Activated CD8-positive, alpha-beta T cell treated with anti-CD3 and anti-CD28 coated beads for 36 hours (primary cell): ENCODE measurements at regions of chr14 and their contacts with region 1.

Region 1: GRCh38 chr14:75050852-75051554 is at the start of gene MLH3:
- DNase-seq: peak; percentile 81
- ATAC-seq: peak; percentile 80
- H3K4me3 Mint-ChIP-seq: peak within 1 kb of the TSS; percentile 84
- H3K27ac Mint-ChIP-seq: peak within 1 kb of the TSS; percentile 91
- H3K4me1 Mint-ChIP-seq: peaks cover 56% of the 10 kb centered on the region
- H3K27me3 Mint-ChIP-seq: no peaks in the 10 kb centered on the region
- CTCF ChIP-seq: no peak
- total RNA-seq, gene MLH3: 26.8 to 29.0 TPM

Region 2: GRCh38 chr14:74913986-74914573 is 136.9 kb before region 1 on chr14:
- CTCF ChIA-PET with region 1: no interaction called
- POLR2A ChIA-PET with region 1: no interaction called
- intact Hi-C with region 1: no loop called
- DNase-seq: peak; percentile 37
- ATAC-seq: peak; percentile 58
- H3K4me3 Mint-ChIP-seq: no peak overlapping the region
- H3K27ac Mint-ChIP-seq: no peak overlapping the region
- H3K4me1 Mint-ChIP-seq: no peaks in the 10 kb centered on the region
- H3K27me3 Mint-ChIP-seq: no peaks in the 10 kb centered on the region
- CTCF ChIP-seq: peak; percentile 34

Region 3: GRCh38 chr14:75002392-75003249 is 48.4 kb before region 1 on chr14 and contains the start of gene EIF2B2:
- CTCF ChIA-PET with region 1: no interaction called
- POLR2A ChIA-PET with region 1: no interaction called
- intact Hi-C with region 1: no loop called
- DNase-seq: peak; percentile 99
- ATAC-seq: peak; percentile 98
- H3K4me3 Mint-ChIP-seq: peak within 1 kb of the TSS; percentile 94
- H3K27ac Mint-ChIP-seq: peak within 1 kb of the TSS; percentile 95
- H3K4me1 Mint-ChIP-seq: peaks cover 35% of the 10 kb centered on the region
- H3K27me3 Mint-ChIP-seq: no peaks in the 10 kb centered on the region
- CTCF ChIP-seq: peak; percentile 18
- total RNA-seq, gene EIF2B2: 50.5 to 51.9 TPM

Region 4: DNA sequence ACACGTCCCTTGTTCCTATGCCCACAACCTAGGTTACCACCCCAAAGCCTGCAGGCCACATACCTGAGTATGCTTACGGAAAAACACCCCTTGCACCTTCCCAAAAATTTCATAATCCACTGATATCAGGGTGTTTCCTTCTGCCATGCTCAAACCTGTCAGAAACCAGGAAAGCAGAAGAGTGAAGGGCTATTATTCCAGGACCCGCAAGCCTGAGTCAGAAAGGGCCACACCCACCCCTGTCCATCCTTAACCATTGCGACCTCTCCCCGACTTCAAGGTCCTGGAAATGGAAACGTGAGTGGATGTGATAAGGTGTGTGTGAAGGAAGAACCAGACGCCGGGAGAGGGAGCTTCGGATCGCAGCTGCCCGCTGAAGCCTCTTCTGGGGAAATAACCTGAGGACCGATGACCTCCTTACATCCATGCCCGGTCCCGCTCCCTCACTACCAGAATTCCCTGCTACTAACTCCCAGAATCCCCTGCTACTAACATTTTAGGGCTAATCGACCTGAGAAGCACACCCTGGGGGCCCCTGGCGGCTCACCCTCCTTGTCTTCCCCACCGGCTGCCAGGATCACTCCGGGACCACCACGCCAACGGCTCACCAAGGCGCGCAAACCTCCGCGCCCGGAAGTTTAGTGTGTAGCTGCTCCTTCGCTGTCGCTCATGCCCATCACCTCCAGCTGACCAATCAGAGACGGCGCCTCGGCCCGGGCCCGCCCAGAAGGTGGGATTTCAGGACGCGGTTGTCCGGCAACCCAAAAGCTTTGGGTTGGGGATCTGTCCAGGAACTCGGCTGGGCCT is 12.6 kb after region 1 on chr14 and contains the start of gene ACYP1:
- CTCF ChIA-PET with region 1: interaction called, 28 read pairs
- POLR2A ChIA-PET with region 1: interaction called, 8 read pairs
- intact Hi-C with region 1: no loop called
- DNase-seq: peak; percentile 94
- ATAC-seq: peak; percentile 100
- H3K4me3 Mint-ChIP-seq: peak within 1 kb of the TSS; percentile 100
- H3K27ac Mint-ChIP-seq: peak within 1 kb of the TSS; percentile 95
- H3K4me1 Mint-ChIP-seq: peaks cover 29% of the 10 kb centered on the region
- H3K27me3 Mint-ChIP-seq: no peaks in the 10 kb centered on the region
- CTCF ChIP-seq: no peak
- total RNA-seq, gene ACYP1: 33.9 to 38.6 TPM